Activated CD8-positive, alpha-beta T cell treated with anti-CD3 and anti-CD28 coated beads, Interleukin-2, amount 10 ng/mL, durations not matched to agents 7 days and 5 days (primary cell): ENCODE measurements at regions of chr2 and their contacts with region 1.

Region 1: GRCh38 chr2:190534310-190535120 is at the start of gene NEMP2:
- DNase-seq: peak; percentile 86
- ATAC-seq: peak; percentile 80
- H3K4me3 Mint-ChIP-seq: peak within 1 kb of the TSS; percentile 95
- H3K27ac Mint-ChIP-seq: peak within 1 kb of the TSS; percentile 99
- H3K4me1 Mint-ChIP-seq: peaks cover 56% of the 10 kb centered on the region
- H3K27me3 Mint-ChIP-seq: no peaks in the 10 kb centered on the region
- total RNA-seq, gene NEMP2: 18.4 to 23.2 TPM

Region 2: DNA sequence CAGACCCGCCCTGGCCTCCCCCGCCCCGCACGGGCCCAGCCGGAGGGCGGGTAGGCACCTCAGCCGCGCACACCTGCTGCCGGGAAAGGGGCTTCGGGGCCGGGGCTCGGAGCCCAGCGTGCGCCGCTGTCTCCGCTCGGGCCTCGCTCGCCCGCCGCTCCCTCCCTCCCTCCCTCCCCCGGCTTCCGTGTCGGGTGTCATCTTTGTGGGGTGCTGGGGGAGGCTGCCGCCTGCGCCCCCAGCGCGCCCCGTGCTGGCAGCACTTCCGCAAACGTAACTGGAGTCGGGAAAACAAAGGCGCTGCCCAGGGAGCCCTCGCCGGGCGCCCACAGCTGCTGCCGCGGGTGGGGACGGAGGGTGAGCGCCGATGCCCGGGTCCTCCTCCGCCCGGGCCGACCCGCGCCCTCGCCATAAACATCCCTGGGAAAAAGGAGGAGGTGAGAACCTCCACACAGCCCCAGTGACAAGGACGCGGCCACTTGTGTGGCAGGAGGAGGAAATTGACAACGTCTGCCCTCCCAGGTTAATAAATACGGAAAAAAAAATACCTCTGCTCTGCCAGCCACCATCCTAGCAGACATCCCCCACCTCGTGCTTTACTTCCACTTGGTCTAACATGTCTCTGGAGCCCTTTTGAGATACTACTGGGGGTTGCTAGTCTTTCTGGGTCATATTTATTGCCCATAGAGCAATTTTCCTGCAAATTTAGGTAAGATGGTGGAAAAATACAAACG is 125.8 kb before region 1 on chr2:
- CTCF ChIA-PET with region 1: interaction called, 3 read pairs
- POLR2A ChIA-PET with region 1: interaction called, 34 read pairs
- DNase-seq: peak; percentile 81
- ATAC-seq: peak; percentile 50
- H3K4me3 Mint-ChIP-seq: peak overlapping the region; percentile 87
- H3K27ac Mint-ChIP-seq: peak overlapping the region; percentile 94
- H3K4me1 Mint-ChIP-seq: peaks cover 39% of the 10 kb centered on the region
- H3K27me3 Mint-ChIP-seq: no peaks in the 10 kb centered on the region

Region 3: GRCh38 chr2:190519975-190520767 is 14.3 kb before region 1 on chr2:
- CTCF ChIA-PET with region 1: interaction called, 5 read pairs
- POLR2A ChIA-PET with region 1: interaction called, 18 read pairs
- DNase-seq: peak; percentile 41
- ATAC-seq: peak; percentile 84
- H3K4me3 Mint-ChIP-seq: peak overlapping the region; percentile 0
- H3K27ac Mint-ChIP-seq: peak overlapping the region; percentile 68
- H3K4me1 Mint-ChIP-seq: peaks cover 44% of the 10 kb centered on the region
- H3K27me3 Mint-ChIP-seq: no peaks in the 10 kb centered on the region

Region 4: GRCh38 chr2:190649035-190649797 is 114.7 kb after region 1 on chr2 and contains the start of gene NAB1:
- CTCF ChIA-PET with region 1: interaction called, 3 read pairs
- POLR2A ChIA-PET with region 1: interaction called, 13 read pairs
- DNase-seq: peak; percentile 60
- ATAC-seq: peak; percentile 79
- H3K4me3 Mint-ChIP-seq: peak within 1 kb of the TSS; percentile 92
- H3K27ac Mint-ChIP-seq: peak within 1 kb of the TSS; percentile 75
- H3K4me1 Mint-ChIP-seq: peaks cover 18% of the 10 kb centered on the region
- H3K27me3 Mint-ChIP-seq: peaks cover 10% of the 10 kb centered on the region
- total RNA-seq, gene NAB1: 23.4 to 23.7 TPM

Region 5: DNA sequence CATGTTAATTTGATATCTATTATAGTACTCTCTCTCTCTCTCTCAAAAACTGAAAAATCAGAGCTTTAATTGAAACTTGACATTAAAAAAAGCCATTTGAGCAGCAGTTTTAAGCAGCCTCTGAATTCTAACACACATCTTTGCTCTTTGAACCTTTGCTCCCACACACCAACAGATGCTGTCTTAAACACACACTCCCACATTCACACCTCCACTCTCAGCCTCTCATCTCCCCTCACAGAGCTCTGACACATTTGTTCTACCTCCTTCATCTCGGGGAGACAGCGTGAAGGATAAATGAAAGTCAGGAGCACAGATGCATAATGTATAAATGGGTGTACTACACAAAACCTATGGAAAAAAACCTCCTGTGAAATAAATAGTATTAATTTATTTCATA is 209.5 kb after region 1 on chr2:
- CTCF ChIA-PET with region 1: no interaction called
- POLR2A ChIA-PET with region 1: no interaction called
- DNase-seq: no peak
- ATAC-seq: no peak
- H3K4me3 Mint-ChIP-seq: no peak overlapping the region
- H3K27ac Mint-ChIP-seq: no peak overlapping the region
- H3K4me1 Mint-ChIP-seq: no peaks in the 10 kb centered on the region
- H3K27me3 Mint-ChIP-seq: no peaks in the 10 kb centered on the region